OCI-LY7 (cell line): ENCODE measurements at regions of chr9 and their contacts with region 1.

Region 1: GRCh38 chr9:4762108-4762885 is 21.3 kb upstream of the AK3 start:
- DNase-seq: peak; percentile 87
- H3K4me3 ChIP-seq: peak overlapping the region; percentile 58
- H3K27ac ChIP-seq: no peak overlapping the region
- H3K4me1 ChIP-seq: peaks cover 17% of the 10 kb centered on the region
- CTCF ChIP-seq: peak; percentile 90

Region 2: GRCh38 chr9:4923580-4924544 is 161.6 kb after region 1 on chr9:
- CTCF ChIA-PET with region 1: no interaction called
- POLR2A ChIA-PET with region 1: no interaction called
- intact Hi-C with region 1: loop called (anchors 1 kb)
- DNase-seq: peak; percentile 55
- H3K4me3 ChIP-seq: no peak overlapping the region
- H3K27ac ChIP-seq: no peak overlapping the region
- H3K4me1 ChIP-seq: peaks cover 4% of the 10 kb centered on the region
- CTCF ChIP-seq: peak; percentile 83

Region 3: DNA sequence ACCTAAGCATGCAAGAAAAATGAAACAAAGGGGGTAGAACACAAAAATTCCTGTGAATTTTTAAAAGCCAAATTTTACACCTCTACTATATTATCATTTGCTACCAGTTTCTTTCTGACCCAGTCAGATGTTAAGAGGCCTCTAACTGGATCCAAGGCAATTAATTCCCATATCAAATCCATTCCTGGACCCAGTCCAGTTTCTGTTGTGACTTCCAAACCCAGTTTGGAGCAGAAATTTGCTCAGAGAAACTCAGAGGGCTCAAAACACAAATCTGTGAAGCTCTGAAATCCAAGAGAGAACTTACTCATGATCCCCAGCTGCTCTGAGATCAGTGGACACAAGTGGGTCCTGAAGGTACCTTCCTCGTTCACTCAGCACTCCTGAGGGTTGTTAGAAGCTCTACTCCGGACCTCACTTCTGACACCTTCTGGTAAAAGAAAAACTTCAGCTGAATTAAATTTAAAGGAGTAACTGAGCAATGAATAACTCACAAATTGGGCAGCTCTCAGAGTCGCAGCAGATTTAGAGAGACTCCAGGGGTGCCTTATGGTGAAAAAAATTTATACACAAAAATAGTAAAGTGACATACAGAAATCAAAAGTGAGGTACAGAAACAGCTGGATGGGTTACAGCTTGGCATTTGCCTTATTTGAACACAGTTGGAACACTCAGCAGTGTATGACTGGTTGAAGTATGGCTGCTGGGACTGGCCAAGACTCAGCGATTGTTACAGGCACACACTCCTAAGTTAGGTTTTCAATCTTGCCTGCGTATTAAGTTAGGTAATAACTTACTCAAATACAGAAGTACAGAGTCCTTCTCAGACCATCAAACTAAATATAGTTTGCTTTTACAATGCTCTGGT is 501.3 kb after region 1 on chr9:
- CTCF ChIA-PET with region 1: no interaction called
- POLR2A ChIA-PET with region 1: no interaction called
- intact Hi-C with region 1: loop called (anchors 10 kb)
- DNase-seq: peak; percentile 19
- H3K4me3 ChIP-seq: no peak overlapping the region
- H3K27ac ChIP-seq: no peak overlapping the region
- H3K4me1 ChIP-seq: no peaks in the 10 kb centered on the region
- CTCF ChIP-seq: peak; percentile 43